GM13977 (cell line): ENCODE measurements at regions of chr3 and their contacts with region 1.

Region 1: GRCh38 chr3:194727435-194728128 is 41.9 kb downstream of the FAM43A start:
- DNase-seq: no peak
- CTCF ChIP-seq: no peak

Region 2: DNA sequence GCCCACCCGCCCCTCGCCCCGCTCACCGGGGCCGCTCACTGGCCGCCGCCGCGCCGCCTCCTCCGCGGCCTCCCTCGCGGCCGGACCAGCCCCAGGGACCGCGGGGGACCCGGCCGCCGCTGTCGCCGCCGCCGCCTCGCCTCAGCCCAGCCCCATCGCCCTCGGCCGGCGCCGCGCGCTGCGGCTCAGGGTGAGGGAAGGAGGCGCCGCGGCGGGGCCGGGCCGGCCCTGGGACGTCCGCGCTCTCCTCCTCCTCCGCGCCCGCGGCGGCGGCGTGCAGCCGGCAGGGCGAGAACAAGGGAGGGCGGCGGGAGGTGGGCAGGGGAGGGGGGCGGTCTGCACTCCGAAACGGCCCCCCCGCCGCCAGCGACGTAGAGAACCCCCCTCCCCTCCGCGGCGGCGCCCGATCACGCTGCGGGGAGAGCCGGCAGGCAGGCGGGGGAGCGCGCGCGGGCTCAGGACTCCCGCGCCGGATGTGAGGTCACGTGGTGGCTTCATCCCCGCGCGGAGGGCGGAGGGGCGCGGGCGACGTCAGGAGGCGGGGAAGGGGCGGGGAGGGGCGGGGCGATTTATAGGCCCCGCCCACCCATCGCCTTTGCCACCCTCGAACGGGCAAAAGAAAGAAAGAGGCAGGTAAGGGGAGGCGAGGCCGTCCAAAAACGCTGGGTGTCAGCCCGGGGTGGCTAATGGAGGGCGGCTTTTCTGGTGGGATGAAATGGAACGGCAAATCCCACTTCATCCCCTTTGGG is 240.9 kb before region 1 on chr3 and contains the start of gene ATP13A3:
- in situ Hi-C with region 1: no loop called
- DNase-seq: peak; percentile 98
- CTCF ChIP-seq: no peak

Region 3: DNA sequence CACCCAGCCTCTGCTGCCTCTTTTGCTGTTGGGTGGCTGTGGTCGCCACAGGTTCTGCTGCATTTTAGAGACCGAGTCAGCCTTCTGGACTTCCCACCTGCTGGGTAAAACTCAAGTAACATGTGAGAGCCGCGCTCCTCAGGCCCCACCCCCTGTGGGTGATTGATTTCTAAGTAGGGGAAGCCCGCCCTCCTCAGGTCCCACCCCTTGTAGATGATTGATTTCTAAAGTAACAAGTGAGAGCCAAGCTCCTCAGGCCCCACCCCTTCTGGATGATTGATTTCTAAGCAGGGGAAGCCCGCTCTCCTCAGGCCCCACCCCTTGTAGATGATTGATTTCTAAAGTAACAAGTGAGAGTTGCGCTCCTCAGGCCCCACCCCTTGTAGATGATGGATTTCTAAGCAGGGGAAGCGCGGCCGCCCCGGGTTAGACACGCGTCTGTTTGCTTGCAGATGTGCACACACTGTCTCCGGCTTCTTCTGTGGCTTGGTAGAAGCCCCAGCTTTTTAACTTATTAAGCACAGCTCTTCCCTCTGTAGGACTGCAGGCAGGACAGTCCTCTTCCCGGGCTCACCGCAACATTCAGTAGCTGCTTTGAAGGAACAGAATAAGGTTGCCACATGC is 41.5 kb after region 1 on chr3:
- in situ Hi-C with region 1: loop called (anchors 5 kb)
- DNase-seq: peak; percentile 91
- CTCF ChIP-seq: no peak